ENCODE measurements at regions of chr17 and their contacts with region 1.

Region 1: DNA sequence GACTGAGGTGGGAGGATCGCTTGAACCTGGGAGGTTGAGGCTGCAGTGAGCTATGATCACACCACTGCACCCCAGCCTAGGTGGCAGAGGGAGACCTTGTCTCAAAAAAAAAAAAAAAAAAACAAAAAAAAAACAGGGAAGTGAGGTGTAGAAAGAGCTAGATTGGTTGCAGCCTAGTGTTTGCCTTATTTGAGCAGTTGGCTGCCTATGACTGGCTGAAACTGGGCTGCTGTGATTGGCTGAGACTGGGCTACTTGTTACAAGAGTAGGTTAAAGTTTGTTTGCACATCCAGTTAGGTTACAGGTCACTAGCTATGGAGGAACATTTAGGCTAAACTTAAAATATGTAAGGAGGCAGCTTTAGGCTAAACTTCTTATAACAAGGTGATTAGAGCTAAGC is 5.7 kb downstream of the DHRS7B start:
- DNase-seq: no peak
- ATAC-seq: peak in 7 of 8 donors; percentile 52 to 70 (median 63)
- H3K4me3 ChIP-seq: no peak overlapping the region
- H3K27ac ChIP-seq: peak overlapping the region in 4 of 10 donors; percentile 20 to 57 (median 42)
- H3K4me1 ChIP-seq: peaks cover 3 to 44% (median 26%) of the 10 kb centered on the region in 9 donors
- H3K27me3 ChIP-seq: no peaks in the 10 kb centered on the region
- CTCF ChIP-seq: no peak

Region 2: DNA sequence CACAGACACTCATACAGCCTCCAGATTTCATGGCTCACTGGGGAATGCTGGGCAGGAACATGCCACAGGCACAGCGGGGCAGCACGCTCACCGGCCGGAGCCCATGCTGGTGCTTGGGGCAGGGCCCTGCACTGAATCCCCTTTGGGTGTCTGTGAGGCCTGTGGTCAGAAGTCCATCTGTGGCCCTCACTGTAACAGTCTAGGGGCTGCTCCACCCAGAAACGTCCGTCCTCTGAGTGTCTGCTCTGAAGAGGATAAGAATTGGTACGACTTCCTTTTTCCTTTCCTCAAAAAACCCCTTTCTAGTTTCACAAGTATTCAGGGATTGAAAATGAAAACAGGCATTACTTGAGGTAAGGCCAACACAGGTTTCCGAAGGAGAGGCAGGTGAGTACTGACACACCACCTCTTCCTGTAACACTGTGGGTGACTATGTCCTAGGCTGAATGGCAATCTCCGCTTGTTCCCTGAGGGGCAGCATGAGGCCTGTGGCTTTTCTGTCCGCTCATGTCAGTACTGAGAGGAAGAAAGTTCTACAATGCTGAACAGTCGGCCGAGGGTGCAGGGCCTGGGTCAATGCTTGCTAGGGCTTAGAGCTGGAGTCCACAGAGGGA is 39.0 kb after region 1 on chr17:
- intact Hi-C with region 1: loop called in 1 of 10 experiments (anchors 5 kb)
- DNase-seq: no peak
- ATAC-seq: no peak
- H3K4me3 ChIP-seq: no peak overlapping the region
- H3K27ac ChIP-seq: peak overlapping the region in 6 of 10 donors; percentile 0 to 60 (median 29)
- H3K4me1 ChIP-seq: peaks cover 4 to 80% (median 56%) of the 10 kb centered on the region in 9 donors
- H3K27me3 ChIP-seq: no peaks in the 10 kb centered on the region
- CTCF ChIP-seq: no peak

Region 3: DNA sequence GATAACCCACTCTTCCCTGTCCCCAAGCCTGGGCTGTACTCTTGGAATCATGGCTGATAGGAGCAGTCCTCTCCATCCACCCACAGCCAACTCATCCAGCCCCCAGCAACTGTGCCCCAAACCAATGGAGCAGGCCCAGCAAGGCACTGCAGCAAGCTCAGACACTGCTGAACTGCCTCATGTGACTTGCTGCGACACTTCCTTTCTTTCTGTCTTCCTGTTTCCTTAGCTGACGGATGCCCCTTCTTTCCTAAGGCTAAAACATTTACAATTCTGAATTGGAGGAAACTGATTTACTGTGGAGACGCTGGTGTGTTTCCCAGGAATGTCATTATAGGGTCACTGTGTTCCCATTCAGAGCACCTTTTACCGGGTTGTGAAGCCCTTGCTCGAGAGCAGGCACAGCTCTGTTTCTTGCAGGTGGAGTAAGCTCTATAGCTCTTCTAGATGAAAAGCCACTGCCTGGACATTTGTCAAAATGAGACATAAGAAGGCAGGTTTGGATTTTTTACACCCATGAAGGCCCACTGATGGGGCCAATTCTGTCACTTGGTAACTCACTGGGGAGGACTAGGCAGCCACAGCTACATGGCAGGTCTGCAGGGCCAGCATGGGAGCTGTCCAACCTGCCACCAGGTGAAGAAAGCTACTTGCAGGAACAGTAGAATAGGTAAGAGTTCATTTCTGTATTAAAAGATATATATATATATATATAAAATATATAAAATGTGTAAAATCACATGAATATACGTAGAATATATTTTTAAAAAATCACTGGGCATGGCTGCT is 54.2 kb after region 1 on chr17:
- intact Hi-C with region 1: loop called in 1 of 10 experiments (anchors 10 kb)
- DNase-seq: peak in 1 of 2 donors; percentile 29
- ATAC-seq: peak in 7 of 8 donors; percentile 36 to 87 (median 74)
- H3K4me3 ChIP-seq: no peak overlapping the region
- H3K27ac ChIP-seq: peak overlapping the region; percentile 20 to 85 (median 63)
- H3K4me1 ChIP-seq: peaks cover 0 to 54% (median 22%) of the 10 kb centered on the region in 9 donors
- H3K27me3 ChIP-seq: no peaks in the 10 kb centered on the region
- CTCF ChIP-seq: no peak

Region 4: DNA sequence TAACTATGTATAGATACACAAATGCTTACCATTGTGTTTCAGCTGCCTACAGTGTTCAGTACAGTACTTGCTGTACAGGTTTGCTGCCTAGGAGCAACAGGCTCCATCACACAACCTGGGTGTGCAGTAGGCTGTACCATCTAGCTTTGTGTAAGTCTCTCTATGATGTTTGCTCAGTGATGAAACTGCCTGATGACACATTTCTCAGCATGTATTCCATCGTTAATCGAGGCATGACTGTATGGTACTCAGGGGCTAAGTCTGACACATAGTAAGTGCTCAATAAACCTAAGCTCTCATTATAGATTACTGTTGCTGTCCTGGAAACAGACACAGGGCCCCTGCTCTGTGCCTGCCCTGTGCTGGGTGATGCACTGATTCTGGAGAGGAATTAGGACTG is 261.8 kb after region 1 on chr17:
- intact Hi-C with region 1: no loop called
- DNase-seq: no peak
- ATAC-seq: no peak
- H3K4me3 ChIP-seq: no peak overlapping the region
- H3K27ac ChIP-seq: no peak overlapping the region
- H3K4me1 ChIP-seq: peaks cover 0 to 13% (median 4%) of the 10 kb centered on the region in 9 donors
- H3K27me3 ChIP-seq: no peaks in the 10 kb centered on the region
- CTCF ChIP-seq: no peak